Ovary (tissue), 10 donors: ENCODE measurements at regions of chr9 and their contacts with region 1.

Region 1: GRCh38 chr9:4375424-4376200 is 75.7 kb upstream of the GLIS3 start:
- DNase-seq: no peak
- H3K4me3 ChIP-seq: no peak overlapping the region
- H3K27ac ChIP-seq: no peak overlapping the region
- H3K4me1 ChIP-seq: no peaks in the 10 kb centered on the region
- H3K27me3 ChIP-seq: no peaks in the 10 kb centered on the region
- CTCF ChIP-seq: peak; percentile 17 to 68 (median 55)
- EP300 ChIP-seq: no peak
- POLR2A ChIP-seq: no peak

Region 2: DNA sequence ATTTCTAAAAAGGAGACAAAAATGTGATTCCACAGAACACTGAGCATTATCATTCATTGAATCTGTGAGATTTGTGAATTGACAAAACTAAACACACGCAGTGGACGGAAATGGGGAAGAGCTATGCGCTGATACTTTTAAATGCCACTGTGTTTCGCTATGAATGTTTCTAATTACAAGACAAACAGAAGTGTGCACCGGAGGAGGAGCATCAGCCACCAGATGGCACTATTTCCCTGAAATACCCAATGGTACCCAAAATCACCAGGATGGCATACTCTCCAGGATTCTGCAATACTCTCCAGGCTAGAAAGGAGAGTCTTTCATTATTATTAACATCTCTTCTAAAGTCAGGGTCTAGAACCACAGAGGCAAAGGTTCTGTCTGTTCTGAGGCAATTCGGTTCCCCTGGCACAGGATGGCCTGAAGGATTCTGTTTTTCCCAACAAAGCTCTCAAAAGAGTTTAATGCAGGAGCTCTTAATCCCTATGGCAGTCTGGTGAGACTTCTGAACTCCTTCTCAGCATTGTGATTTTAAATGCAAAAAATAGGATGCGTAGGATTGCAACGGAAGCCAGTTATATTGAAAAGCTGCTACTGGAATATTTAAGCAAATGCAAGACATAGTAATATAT is 1517.9 kb before region 1 on chr9:
- intact Hi-C with region 1: loop called in 2 of 4 experiments (anchors 10 kb)
- DNase-seq: peak; percentile 53 to 75 (median 63)
- H3K4me3 ChIP-seq: no peak overlapping the region
- H3K27ac ChIP-seq: no peak overlapping the region
- H3K4me1 ChIP-seq: no peaks in the 10 kb centered on the region
- H3K27me3 ChIP-seq: no peaks in the 10 kb centered on the region
- CTCF ChIP-seq: peak; percentile 42 to 64 (median 61)
- EP300 ChIP-seq: no peak
- POLR2A ChIP-seq: no peak

Region 3: DNA sequence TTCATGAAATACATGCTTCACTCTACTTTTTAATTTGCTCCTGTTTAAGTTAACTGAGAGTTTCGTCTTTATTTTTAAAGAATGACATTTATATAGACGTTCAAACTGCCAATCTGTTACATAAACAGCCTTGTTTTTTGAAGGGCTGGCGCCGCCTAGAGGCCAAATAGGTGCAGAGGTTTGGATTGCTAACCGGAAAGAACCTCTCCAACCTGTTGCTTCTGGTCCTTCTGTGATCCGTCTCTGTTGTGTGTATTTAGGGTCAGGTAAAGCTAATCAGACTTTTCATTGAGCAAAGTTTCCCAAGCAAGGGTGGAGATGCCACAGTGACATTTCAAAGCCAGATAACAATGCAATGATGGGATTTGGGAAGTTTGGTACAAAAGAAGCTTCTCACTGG is 36.3 kb before region 1 on chr9:
- intact Hi-C with region 1: no loop called
- DNase-seq: peak; percentile 64 to 89 (median 83)
- H3K4me3 ChIP-seq: no peak overlapping the region
- H3K27ac ChIP-seq: no peak overlapping the region
- H3K4me1 ChIP-seq: no peaks in the 10 kb centered on the region
- H3K27me3 ChIP-seq: no peaks in the 10 kb centered on the region
- CTCF ChIP-seq: peak; percentile 54 to 90 (median 81)
- EP300 ChIP-seq: no peak
- POLR2A ChIP-seq: no peak